ENCODE measurements at regions of chr3 and their contacts with region 1.

Region 1: GRCh38 chr3:169215461-169216352 is 447.8 kb downstream of the MECOM start:
- DNase-seq: no peak
- ATAC-seq: no peak

Region 2: DNA sequence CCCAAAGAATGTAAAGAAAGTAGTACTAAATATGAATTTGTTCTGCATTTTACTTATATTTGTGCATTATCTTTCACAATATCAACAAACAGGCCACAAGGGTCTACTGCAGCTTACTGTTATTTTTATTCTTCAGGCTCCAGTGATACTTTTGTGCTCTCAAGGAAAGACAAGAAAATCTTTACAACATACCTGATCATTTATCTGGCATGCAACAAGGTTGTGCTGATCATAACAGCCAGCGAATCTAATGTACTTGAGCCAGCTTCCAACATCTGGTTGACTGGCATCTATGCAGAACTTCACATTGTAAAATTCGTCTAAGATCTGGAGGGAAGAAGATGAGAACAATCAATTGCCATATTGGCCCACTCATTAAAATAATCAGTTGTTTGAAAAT is 72.2 kb before region 1 on chr3:
- intact Hi-C with region 1: loop called (anchors 2 kb)
- DNase-seq: no peak
- ATAC-seq: no peak

Region 3: GRCh38 chr3:169278092-169278491 is 62.4 kb after region 1 on chr3:
- intact Hi-C with region 1: no loop called
- DNase-seq: no peak
- ATAC-seq: no peak